ENCODE measurements at regions of chr10 and their contacts with region 1.

Region 1: DNA sequence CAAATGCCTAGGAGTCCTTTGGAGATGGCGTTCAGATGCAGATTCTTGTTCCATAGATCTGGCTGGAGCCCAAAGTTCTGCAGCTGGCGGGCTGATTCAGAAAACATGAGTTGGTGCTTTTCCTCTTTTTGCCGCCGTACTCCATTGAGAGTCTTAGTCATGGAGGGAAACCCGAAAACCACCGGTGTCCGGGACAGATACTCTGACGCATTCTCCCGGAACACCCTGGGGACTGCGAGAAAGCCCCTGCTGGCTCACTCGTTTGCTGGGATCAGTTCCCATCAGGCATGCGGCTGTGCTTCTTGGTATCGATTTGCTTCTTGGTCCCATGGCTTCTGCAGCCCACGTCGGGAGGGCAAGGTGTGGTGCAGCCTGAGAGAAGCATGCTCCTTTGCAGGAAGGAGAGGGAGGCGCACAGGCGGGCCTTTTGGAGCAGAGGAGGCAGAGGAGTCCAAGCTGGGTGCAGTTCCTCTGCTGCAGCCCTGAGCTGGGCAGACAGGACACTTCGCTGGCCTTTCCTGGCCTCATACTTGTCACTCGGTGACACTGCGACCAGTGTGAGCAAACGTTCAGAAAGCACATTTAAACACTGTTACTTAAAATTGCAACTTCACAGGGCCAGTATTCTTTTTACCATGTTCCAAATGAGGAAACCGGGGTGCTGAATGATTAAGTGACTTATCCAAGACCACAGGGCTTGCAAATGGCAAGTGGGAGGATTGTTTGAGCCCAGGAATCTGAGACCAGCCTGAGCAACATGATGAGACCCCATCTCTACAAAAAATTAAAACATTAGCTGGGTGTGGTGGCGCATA is 30.6 kb upstream of the PFKFB3 start:
- DNase-seq: no peak
- H3K4me3 ChIP-seq: no peak overlapping the region
- H3K4me3 Mint-ChIP-seq: peak overlapping the region in 4 of 8 donors; percentile 29 to 79 (median 62)
- H3K27ac ChIP-seq: no peak overlapping the region
- H3K27ac Mint-ChIP-seq: peak overlapping the region in 6 of 7 donors; percentile 22 to 74 (median 58)
- H3K4me1 ChIP-seq: peaks cover 77% of the 10 kb centered on the region
- H3K4me1 Mint-ChIP-seq: peaks cover 50 to 94% (median 72%) of the 10 kb centered on the region in 4 donors
- H3K27me3 ChIP-seq: no peaks in the 10 kb centered on the region
- H3K27me3 Mint-ChIP-seq: no peaks in the 10 kb centered on the region

Region 2: GRCh38 chr10:6102128-6102527 is 70.0 kb before region 1 on chr10:
- CTCF ChIA-PET with region 1: no interaction called
- POLR2A ChIA-PET with region 1: no interaction called
- intact Hi-C with region 1: no loop called
- DNase-seq: no peak
- H3K4me3 ChIP-seq: no peak overlapping the region
- H3K4me3 Mint-ChIP-seq: no peak overlapping the region
- H3K27ac ChIP-seq: no peak overlapping the region
- H3K27ac Mint-ChIP-seq: peak overlapping the region in 2 of 7 donors; percentile 70 to 85
- H3K4me1 ChIP-seq: no peaks in the 10 kb centered on the region
- H3K4me1 Mint-ChIP-seq: peaks cover 14 to 26% (median 17%) of the 10 kb centered on the region in 4 donors
- H3K27me3 ChIP-seq: no peaks in the 10 kb centered on the region
- H3K27me3 Mint-ChIP-seq: no peaks in the 10 kb centered on the region

Region 3: GRCh38 chr10:6151087-6151977 is 20.8 kb before region 1 on chr10:
- CTCF ChIA-PET with region 1: interaction called, 16 read pairs
- POLR2A ChIA-PET with region 1: no interaction called
- intact Hi-C with region 1: no loop called
- DNase-seq: peak in 4 of 5 donors; percentile 46 to 64 (median 56)
- H3K4me3 ChIP-seq: no peak overlapping the region
- H3K4me3 Mint-ChIP-seq: peak overlapping the region in 7 of 8 donors; percentile 36 to 75 (median 58)
- H3K27ac ChIP-seq: peak overlapping the region; percentile 1
- H3K27ac Mint-ChIP-seq: peak overlapping the region; percentile 86 to 93 (median 91)
- H3K4me1 ChIP-seq: peaks cover 47% of the 10 kb centered on the region
- H3K4me1 Mint-ChIP-seq: peaks cover 36 to 81% (median 49%) of the 10 kb centered on the region in 4 donors
- H3K27me3 ChIP-seq: no peaks in the 10 kb centered on the region
- H3K27me3 Mint-ChIP-seq: no peaks in the 10 kb centered on the region

Region 4: GRCh38 chr10:6182454-6183098 is 10.5 kb after region 1 on chr10:
- CTCF ChIA-PET with region 1: interaction called, 50 read pairs
- POLR2A ChIA-PET with region 1: interaction called, 10 read pairs
- intact Hi-C with region 1: no loop called
- DNase-seq: no peak
- H3K4me3 ChIP-seq: no peak overlapping the region
- H3K4me3 Mint-ChIP-seq: no peak overlapping the region
- H3K27ac ChIP-seq: no peak overlapping the region
- H3K27ac Mint-ChIP-seq: peak overlapping the region in 1 of 7 donors; percentile 65
- H3K4me1 ChIP-seq: no peaks in the 10 kb centered on the region
- H3K4me1 Mint-ChIP-seq: peaks cover 7 to 45% (median 18%) of the 10 kb centered on the region in 4 donors
- H3K27me3 ChIP-seq: no peaks in the 10 kb centered on the region
- H3K27me3 Mint-ChIP-seq: no peaks in the 10 kb centered on the region

Region 5: GRCh38 chr10:6256439-6256838 is 84.4 kb after region 1 on chr10:
- CTCF ChIA-PET with region 1: no interaction called
- POLR2A ChIA-PET with region 1: no interaction called
- intact Hi-C with region 1: no loop called
- DNase-seq: no peak
- H3K4me3 ChIP-seq: no peak overlapping the region
- H3K4me3 Mint-ChIP-seq: no peak overlapping the region
- H3K27ac ChIP-seq: no peak overlapping the region
- H3K27ac Mint-ChIP-seq: peak overlapping the region in 1 of 7 donors; percentile 10
- H3K4me1 ChIP-seq: no peaks in the 10 kb centered on the region
- H3K4me1 Mint-ChIP-seq: no peaks in the 10 kb centered on the region
- H3K27me3 ChIP-seq: no peaks in the 10 kb centered on the region
- H3K27me3 Mint-ChIP-seq: peaks cover 0 to 1% of the 10 kb centered on the region in 2 donors

Region 6: GRCh38 chr10:6409971-6410651 is 238.0 kb after region 1 on chr10:
- CTCF ChIA-PET with region 1: interaction called, 25 read pairs
- POLR2A ChIA-PET with region 1: interaction called, 6 read pairs
- intact Hi-C with region 1: no loop called
- DNase-seq: peak; percentile 71 to 84 (median 79)
- H3K4me3 ChIP-seq: peak overlapping the region; percentile 11 to 34
- H3K4me3 Mint-ChIP-seq: peak overlapping the region; percentile 76 to 93 (median 81)
- H3K27ac ChIP-seq: peak overlapping the region; percentile 78
- H3K27ac Mint-ChIP-seq: peak overlapping the region; percentile 93 to 99 (median 98)
- H3K4me1 ChIP-seq: peaks cover 50% of the 10 kb centered on the region
- H3K4me1 Mint-ChIP-seq: peaks cover 31 to 66% (median 44%) of the 10 kb centered on the region in 4 donors
- H3K27me3 ChIP-seq: no peaks in the 10 kb centered on the region
- H3K27me3 Mint-ChIP-seq: no peaks in the 10 kb centered on the region

Measured in CD4-positive, alpha-beta memory T cell (primary cell).